ENCODE measurements at regions of chr6 and their contacts with region 1.

Region 1: DNA sequence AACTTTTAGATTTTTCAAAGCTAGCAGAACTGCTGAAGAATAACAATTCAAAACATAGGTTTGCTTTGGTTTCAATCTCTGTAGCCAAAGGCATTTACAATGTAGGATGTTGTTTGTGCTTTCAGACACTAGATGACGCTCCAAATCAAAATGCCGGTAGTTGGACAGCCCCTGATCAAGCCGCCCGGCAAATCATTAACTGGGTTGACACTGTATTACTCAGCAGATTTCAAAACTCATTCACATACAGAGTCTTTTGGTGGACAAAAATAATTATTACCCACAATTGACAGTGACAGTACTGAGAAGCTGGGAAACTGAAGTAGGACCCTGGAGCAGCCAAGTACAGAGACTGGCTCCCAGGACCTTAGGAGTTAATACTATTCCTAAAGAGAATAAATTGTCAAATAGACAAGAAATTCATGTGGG is 21.3 kb upstream of the HFE start:
- DNase-seq: peak; percentile 72
- ATAC-seq: peak; percentile 95
- H3K4me3 Mint-ChIP-seq: no peak overlapping the region
- H3K27ac Mint-ChIP-seq: no peak overlapping the region
- H3K4me1 Mint-ChIP-seq: peaks cover 2% of the 10 kb centered on the region
- H3K27me3 Mint-ChIP-seq: no peaks in the 10 kb centered on the region

Region 2: GRCh38 chr6:26054857-26055669 is 10.9 kb before region 1 on chr6:
- CTCF ChIA-PET with region 1: interaction called, 13 read pairs
- POLR2A ChIA-PET with region 1: interaction called, 9 read pairs
- intact Hi-C with region 1: no loop called
- DNase-seq: peak; percentile 91
- ATAC-seq: peak; percentile 70
- H3K4me3 Mint-ChIP-seq: peak overlapping the region; percentile 96
- H3K27ac Mint-ChIP-seq: peak overlapping the region; percentile 99
- H3K4me1 Mint-ChIP-seq: peaks cover 13% of the 10 kb centered on the region
- H3K27me3 Mint-ChIP-seq: no peaks in the 10 kb centered on the region

Region 3: DNA sequence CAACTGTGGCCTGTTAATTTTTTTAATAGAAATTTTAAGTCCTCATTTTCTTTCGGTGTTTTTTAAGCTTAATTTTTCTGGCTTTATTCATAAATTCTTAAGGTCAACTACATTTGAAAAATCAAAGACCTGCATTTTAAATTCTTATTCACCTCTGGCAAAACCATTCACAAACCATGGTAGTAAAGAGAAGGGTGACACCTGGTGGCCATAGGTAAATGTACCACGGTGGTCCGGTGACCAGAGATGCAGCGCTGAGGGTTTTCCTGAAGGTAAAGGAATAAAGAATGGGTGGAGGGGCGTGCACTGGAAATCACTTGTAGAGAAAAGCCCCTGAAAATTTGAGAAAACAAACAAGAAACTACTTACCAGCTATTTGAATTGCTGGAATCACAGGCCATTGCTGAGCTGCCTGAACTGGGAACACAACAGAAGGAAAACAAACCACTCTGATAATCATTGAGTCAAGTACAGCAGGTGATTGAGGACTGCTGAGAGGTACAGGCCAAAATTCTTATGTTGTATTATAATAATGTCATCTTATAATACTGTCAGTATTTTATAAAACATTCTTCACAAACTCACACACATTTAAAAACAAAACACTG is 31.4 kb after region 1 on chr6:
- CTCF ChIA-PET with region 1: interaction called, 376 read pairs
- POLR2A ChIA-PET with region 1: no interaction called
- intact Hi-C with region 1: loop called (anchors 1 kb)
- DNase-seq: peak; percentile 74
- ATAC-seq: peak; percentile 88
- H3K4me3 Mint-ChIP-seq: no peak overlapping the region
- H3K27ac Mint-ChIP-seq: no peak overlapping the region
- H3K4me1 Mint-ChIP-seq: peaks cover 2% of the 10 kb centered on the region
- H3K27me3 Mint-ChIP-seq: no peaks in the 10 kb centered on the region